Right ventricle myocardium inferior (tissue), 1 donor: ENCODE measurements at regions of chr7 and their contacts with region 1.

Region 1: DNA sequence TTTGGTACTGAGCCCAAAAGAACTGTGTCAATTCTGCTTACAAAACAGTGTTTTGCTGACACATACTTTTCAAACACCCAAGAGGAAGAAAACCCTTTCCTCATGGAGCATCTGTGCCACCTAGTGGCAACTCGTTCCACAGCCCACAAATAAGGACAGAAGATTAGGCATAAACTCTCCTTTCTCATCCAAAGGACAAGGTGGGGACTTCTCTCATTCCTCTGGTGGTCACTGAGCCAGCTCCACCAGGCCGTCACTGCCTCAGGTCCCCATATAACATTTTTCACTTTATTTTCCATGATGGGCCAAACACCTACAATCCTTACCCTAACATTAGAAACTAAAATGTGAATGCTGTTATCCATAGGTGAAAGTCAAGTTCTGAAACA is 76.9 kb downstream of the RNF216 start:
- DNase-seq: peak; percentile 81
- ATAC-seq: peak; percentile 78

Region 2: DNA sequence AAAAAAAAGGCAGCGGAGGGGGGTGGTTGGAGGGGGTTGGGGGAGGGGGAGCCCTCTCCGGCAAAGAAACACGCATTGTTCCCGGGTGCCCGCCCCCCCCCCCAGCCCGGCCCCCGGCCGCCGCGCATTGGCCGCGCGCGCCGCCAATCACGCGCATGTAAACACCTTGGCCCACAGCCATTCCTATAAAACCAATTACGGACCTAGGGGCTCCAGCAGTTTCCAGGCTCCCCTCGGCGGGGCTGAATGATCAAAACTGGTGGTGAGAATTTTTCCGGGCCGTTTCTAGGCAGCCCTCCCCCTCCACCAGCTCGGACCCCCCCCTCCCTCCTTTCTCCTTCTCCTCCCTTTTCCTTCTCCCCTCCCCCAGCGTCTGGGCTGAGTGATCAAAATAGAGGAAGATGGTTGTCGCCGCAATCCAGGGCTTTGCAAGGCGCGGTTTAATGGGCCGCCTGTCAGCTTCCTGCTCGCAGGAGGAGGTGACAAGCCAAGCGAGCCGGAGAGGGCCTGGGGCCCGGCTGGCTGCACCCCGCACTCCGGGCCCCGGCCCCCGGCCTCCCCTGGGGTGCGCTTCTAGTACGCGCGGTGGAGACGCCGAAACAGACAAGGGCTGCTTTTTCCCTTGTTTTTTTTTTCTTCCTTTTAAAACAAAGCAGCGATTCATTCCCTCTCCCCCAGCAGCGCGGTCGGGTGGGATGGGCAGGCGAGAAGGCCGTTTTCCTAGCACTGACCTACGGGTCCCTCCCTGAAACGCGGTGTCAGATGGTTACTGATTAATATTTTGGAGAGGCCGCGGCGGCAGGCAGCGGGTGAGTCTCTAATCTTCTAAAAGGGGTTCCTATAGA is 280.5 kb before region 1 on chr7:
- intact Hi-C with region 1: loop called (anchors 5 kb)
- DNase-seq: peak; percentile 96
- ATAC-seq: peak; percentile 33

Region 3: DNA sequence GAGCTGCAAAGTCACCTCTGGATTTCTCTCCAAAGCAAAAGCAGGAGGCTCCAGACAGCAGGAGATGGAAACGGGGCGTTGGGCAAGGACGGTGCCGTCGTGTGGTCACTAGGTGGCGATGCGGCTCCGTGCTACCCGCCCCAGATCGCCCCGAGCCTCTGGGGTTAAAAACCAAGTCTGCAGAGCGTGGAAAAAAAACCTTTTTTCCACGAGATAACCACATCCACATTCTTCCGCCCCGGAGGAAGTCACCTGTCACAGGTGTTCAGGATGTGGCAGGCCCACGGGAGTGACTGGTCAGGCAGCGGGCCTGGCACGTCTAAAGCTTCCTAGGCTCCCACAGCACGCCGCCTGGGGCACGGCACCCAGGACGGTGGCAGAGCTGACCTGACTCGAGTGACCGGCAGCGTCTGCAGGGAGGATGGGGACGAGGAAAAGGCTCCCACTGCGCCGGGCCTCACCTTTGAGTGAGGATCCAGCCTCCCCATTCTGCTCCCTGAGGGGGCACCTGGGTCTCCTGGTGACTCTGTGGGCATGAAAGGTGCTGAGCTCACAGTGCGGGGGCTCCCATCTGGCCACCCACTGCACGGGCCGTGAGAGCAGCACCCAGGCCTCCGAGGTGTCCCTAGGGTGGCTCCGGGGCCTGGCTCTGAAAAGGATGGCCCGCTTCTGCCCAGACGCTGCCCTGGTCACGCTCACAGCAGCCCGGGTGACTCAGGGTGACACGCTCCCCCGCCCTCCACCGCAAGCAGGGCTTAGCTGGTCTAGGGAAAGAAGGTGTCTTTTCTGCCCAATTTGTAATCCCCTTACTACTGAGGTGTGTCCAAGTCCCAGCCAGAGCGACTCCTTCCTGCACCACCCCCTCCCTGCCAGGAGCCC is 209.6 kb before region 1 on chr7:
- intact Hi-C with region 1: loop called (anchors 1 kb)
- DNase-seq: peak; percentile 91
- ATAC-seq: peak; percentile 85

Region 4: GRCh38 chr7:5665094-5666025 is 39.2 kb before region 1 on chr7:
- intact Hi-C with region 1: loop called (anchors 5 kb)
- DNase-seq: no peak
- ATAC-seq: peak; percentile 80